ENCODE measurements at regions of chr2 and their contacts with region 1.

Region 1: GRCh38 chr2:202479090-202479489 is 103.0 kb downstream of the BMPR2 start:
- DNase-seq: no peak
- ATAC-seq: no peak
- H3K4me3 ChIP-seq: no peak overlapping the region
- H3K4me3 Mint-ChIP-seq: no peak overlapping the region
- H3K27ac ChIP-seq: no peak overlapping the region
- H3K27ac Mint-ChIP-seq: no peak overlapping the region
- H3K4me1 ChIP-seq: no peaks in the 10 kb centered on the region
- H3K4me1 Mint-ChIP-seq: peaks cover 0 to 3% (median 0%) of the 10 kb centered on the region in 3 donors
- H3K27me3 ChIP-seq: no peaks in the 10 kb centered on the region
- H3K27me3 Mint-ChIP-seq: no peaks in the 10 kb centered on the region

Region 2: DNA sequence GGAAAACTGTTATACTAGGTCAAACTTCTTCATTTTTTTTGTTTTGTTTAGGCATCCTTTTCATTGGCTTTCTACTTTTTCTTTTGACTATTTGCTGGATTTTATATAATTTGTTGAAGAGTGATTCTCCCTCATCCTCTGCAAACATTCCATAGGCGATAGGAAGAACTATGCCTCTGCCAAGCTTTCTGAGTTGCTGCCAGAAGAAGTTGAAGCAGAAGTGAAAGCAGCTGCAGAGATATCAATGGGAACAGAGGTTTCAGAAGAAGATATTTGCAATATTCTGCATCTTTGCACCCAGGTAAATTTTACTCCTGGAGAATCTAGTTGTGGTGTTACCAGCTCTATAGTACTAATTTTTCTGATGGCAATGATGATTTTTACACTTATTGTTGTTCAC is 188.1 kb before region 1 on chr2:
- CTCF ChIA-PET with region 1: no interaction called
- POLR2A ChIA-PET with region 1: interaction called in 1 of 2 experiments, 12 read pairs
- DNase-seq: no peak
- ATAC-seq: no peak
- H3K4me3 ChIP-seq: no peak overlapping the region
- H3K4me3 Mint-ChIP-seq: no peak overlapping the region
- H3K27ac ChIP-seq: no peak overlapping the region
- H3K27ac Mint-ChIP-seq: no peak overlapping the region
- H3K4me1 ChIP-seq: no peaks in the 10 kb centered on the region
- H3K4me1 Mint-ChIP-seq: peaks cover 0 to 5% (median 4%) of the 10 kb centered on the region in 3 donors
- H3K27me3 ChIP-seq: no peaks in the 10 kb centered on the region
- H3K27me3 Mint-ChIP-seq: no peaks in the 10 kb centered on the region